ENCODE measurements at regions of chr9 and their contacts with region 1.

Region 1: DNA sequence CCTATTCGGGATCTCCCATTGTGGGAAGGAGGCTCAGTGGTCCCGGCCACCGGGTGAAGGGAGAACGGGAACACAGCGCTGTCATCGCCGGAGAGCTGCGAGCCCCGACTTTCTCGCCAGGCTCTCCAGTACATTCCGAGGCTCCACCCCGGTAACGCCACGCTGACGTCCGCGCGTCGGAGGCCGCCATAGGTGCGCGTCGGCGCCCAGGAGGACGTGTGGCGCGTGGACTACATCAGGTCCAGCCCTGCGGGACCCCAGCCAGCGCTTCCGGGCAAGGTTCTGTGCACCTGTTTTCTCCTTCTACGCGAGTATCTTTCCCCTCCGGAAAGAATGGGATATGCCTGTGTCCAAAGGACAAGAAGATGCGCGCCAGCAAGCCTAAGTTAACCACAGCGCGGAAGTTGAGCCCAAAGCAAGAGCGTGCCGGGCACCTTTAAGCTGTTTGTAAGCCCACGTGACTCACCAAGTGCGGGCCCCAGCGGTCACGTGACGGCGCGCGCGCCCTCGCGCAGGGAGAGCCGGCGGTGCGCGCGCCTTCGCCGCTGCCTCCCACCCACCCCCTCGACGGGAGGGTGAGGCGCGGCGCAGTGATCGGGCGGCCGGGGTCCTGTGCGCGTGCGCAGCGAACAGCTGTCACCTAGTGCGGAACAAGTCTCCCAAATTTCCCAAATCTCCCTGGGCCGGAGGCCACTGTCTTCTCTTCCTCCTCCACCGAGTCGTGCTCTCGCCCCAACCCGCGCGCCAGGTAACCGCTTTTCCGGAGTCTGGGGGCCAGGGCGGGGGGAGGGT is at the start of gene KDM4C:
- DNase-seq: peak; percentile 92 to 97 (median 94)
- ATAC-seq: peak; percentile 87
- H3K4me3 ChIP-seq: peak within 1 kb of the TSS; percentile 71
- H3K4me3 Mint-ChIP-seq: peak within 1 kb of the TSS; percentile 89 to 99 (median 96)
- H3K27ac ChIP-seq: peak within 1 kb of the TSS; percentile 98
- H3K27ac Mint-ChIP-seq: peak within 1 kb of the TSS; percentile 98 to 100 (median 100)
- H3K4me1 ChIP-seq: peaks cover 9 to 12% of the 10 kb centered on the region in 2 donors
- H3K4me1 Mint-ChIP-seq: peaks cover 12 to 41% (median 26%) of the 10 kb centered on the region in 7 donors
- H3K27me3 ChIP-seq: no peaks in the 10 kb centered on the region
- H3K27me3 Mint-ChIP-seq: no peaks in the 10 kb centered on the region
- total RNA-seq, gene KDM4C: 68.6 to 100 (median 93.3) TPM

Region 2: GRCh38 chr9:5437254-5438216 is 1320.1 kb before region 1 on chr9 and contains the start of gene PLGRKT:
- CTCF ChIA-PET with region 1: no interaction called
- POLR2A ChIA-PET with region 1: no interaction called
- intact Hi-C with region 1: loop called in 1 of 2 experiments (anchors 5 kb)
- DNase-seq: peak; percentile 77 to 91 (median 89)
- ATAC-seq: peak; percentile 96
- H3K4me3 ChIP-seq: peak within 1 kb of the TSS; percentile 84
- H3K4me3 Mint-ChIP-seq: peak within 1 kb of the TSS; percentile 86 to 98 (median 96)
- H3K27ac ChIP-seq: peak within 1 kb of the TSS; percentile 81
- H3K27ac Mint-ChIP-seq: peak within 1 kb of the TSS; percentile 90 to 100 (median 98)
- H3K4me1 ChIP-seq: peaks cover 18 to 19% of the 10 kb centered on the region in 2 donors
- H3K4me1 Mint-ChIP-seq: peaks cover 7 to 50% (median 36%) of the 10 kb centered on the region in 7 donors
- H3K27me3 ChIP-seq: no peaks in the 10 kb centered on the region
- H3K27me3 Mint-ChIP-seq: no peaks in the 10 kb centered on the region
- total RNA-seq, gene PLGRKT: 15.8 to 31.7 (median 16.8) TPM

Region 3: DNA sequence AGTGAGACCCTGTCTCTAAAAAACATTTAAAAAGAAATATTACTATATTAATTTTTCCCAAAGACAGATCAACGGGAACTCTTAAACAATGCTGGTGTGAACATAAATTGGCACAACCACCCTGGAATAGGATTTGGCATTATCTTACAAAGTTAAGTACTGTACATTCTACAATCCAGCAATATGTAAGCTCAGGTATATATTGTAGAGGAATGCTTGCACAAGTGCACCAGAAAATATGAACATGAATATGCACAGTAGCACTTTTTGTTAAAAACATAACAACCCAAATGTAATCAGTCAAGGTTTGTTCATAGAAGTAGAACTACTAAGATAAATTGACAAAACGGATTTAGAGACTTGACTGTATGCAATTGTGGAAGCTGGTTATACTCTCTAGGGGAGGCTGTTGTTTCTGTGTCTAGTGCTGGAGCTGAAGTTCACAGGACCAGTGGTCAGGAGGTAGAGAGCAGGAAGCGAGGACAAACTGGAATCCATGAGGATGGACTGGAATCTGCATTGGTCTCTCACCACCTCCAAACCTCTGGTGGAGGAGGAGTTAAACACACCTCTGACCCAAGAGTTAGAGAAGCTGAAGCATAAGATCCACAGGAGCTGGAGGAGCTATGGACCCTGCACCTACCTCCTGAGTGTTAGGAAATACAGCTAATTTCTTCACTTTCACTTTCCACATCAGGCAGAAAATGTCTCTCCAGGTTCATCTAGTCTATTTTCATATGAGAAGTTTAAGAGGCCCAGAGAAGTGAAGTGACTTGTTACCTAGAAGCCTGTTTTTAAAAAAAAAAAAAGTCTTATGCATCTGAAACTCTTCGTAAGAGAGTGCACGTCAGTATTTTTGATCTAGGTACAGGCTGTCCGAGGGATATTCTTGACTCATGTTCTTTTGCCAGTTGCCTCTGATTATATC is 1149.1 kb before region 1 on chr9:
- CTCF ChIA-PET with region 1: no interaction called
- POLR2A ChIA-PET with region 1: no interaction called
- intact Hi-C with region 1: no loop called
- DNase-seq: peak in 3 of 9 donors; percentile 8 to 23 (median 21)
- ATAC-seq: peak; percentile 55
- H3K4me3 ChIP-seq: peak overlapping the region; percentile 39
- H3K4me3 Mint-ChIP-seq: peak overlapping the region; percentile 69 to 88 (median 82)
- H3K27ac ChIP-seq: peak overlapping the region; percentile 47
- H3K27ac Mint-ChIP-seq: peak overlapping the region; percentile 53 to 93 (median 86)
- H3K4me1 ChIP-seq: peaks cover 0 to 6% of the 10 kb centered on the region in 2 donors
- H3K4me1 Mint-ChIP-seq: peaks cover 7 to 51% (median 42%) of the 10 kb centered on the region in 7 donors
- H3K27me3 ChIP-seq: no peaks in the 10 kb centered on the region
- H3K27me3 Mint-ChIP-seq: no peaks in the 10 kb centered on the region

Region 4: DNA sequence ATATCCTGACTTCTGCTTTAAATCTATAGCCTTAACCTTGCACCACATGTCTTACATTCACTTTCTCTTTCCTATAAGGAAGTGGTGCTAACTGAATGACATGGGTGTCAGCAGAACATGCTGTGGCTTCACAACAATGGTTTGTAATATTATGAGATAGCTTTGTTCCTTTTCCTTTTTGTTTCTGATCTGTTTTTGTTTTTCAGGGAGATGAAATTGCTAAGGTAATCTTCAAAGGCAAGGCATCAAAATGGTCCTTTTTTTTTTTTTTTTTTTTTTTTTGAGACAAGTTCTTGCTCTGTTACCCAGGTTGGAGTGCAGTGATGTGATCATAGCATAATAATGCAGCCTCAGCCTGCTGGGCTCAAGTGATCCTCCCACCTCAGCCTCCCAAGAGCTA is 688.7 kb before region 1 on chr9:
- CTCF ChIA-PET with region 1: no interaction called
- POLR2A ChIA-PET with region 1: no interaction called
- intact Hi-C with region 1: loop called in 1 of 2 experiments (anchors 1 kb)
- DNase-seq: peak in 7 of 9 donors; percentile 30 to 73 (median 63)
- ATAC-seq: peak; percentile 97
- H3K4me3 ChIP-seq: peak overlapping the region; percentile 16
- H3K4me3 Mint-ChIP-seq: peak overlapping the region; percentile 54 to 77 (median 72)
- H3K27ac ChIP-seq: peak overlapping the region; percentile 48
- H3K27ac Mint-ChIP-seq: peak overlapping the region; percentile 86 to 96 (median 93)
- H3K4me1 ChIP-seq: peaks cover 8 to 21% of the 10 kb centered on the region in 2 donors
- H3K4me1 Mint-ChIP-seq: peaks cover 17 to 28% (median 27%) of the 10 kb centered on the region in 7 donors
- H3K27me3 ChIP-seq: no peaks in the 10 kb centered on the region
- H3K27me3 Mint-ChIP-seq: no peaks in the 10 kb centered on the region

Region 5: GRCh38 chr9:6703898-6704639 is 53.6 kb before region 1 on chr9:
- CTCF ChIA-PET with region 1: no interaction called
- POLR2A ChIA-PET with region 1: interaction called, 60 read pairs
- intact Hi-C with region 1: loop called (anchors 1 kb)
- DNase-seq: peak; percentile 70 to 86 (median 77)
- ATAC-seq: peak; percentile 90
- H3K4me3 ChIP-seq: peak overlapping the region; percentile 98
- H3K4me3 Mint-ChIP-seq: peak overlapping the region; percentile 82 to 98 (median 95)
- H3K27ac ChIP-seq: peak overlapping the region; percentile 97
- H3K27ac Mint-ChIP-seq: peak overlapping the region; percentile 91 to 98 (median 93)
- H3K4me1 ChIP-seq: no peaks in the 10 kb centered on the region
- H3K4me1 Mint-ChIP-seq: peaks cover 3 to 15% (median 6%) of the 10 kb centered on the region in 7 donors
- H3K27me3 ChIP-seq: no peaks in the 10 kb centered on the region
- H3K27me3 Mint-ChIP-seq: peaks cover 0 to 3% (median 0%) of the 10 kb centered on the region in 5 donors

Region 6: DNA sequence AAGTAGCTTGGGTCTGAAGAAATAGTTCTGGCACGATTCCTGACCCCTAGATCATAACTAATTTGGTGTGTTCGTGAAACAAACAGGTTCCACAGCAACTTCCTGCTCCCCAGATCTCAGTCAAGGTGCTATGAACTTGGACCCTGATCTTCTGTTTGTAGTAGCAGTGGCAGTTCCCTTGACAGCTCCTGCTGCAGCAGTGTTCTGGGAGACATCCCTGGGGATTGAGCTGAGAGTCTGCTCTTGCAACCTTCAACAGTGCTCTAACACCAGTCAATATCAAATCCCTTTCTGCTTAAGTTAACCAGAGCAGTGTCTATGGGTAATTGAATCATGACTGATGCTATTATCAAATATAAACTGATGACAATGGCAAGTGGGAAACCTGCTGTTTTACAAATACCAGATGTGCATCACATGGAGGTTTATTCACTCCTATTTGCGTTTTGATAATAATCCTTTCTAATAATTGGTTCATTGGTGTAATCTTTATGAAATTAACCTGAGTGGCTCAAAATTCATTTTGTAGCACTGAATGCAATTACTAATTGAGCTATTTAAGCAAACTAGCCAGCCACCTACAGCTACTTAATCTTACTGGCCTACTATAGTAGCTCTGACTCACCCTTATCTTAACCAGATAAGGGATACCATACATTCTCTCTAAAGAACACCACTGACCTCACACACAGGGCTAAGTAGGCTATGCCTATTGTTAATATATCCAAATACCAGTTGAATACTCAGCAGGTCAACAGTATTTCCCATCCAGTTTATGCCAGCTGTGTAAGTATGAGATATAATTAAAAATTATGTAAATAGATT is 22.0 kb after region 1 on chr9:
- CTCF ChIA-PET with region 1: interaction called, 3 read pairs
- POLR2A ChIA-PET with region 1: interaction called, 16 read pairs
- intact Hi-C with region 1: no loop called
- DNase-seq: no peak
- ATAC-seq: no peak
- H3K4me3 ChIP-seq: no peak overlapping the region
- H3K4me3 Mint-ChIP-seq: peak overlapping the region in 7 of 10 donors; percentile 17 to 65 (median 43)
- H3K27ac ChIP-seq: no peak overlapping the region
- H3K27ac Mint-ChIP-seq: peak overlapping the region in 3 of 9 donors; percentile 53 to 87 (median 61)
- H3K4me1 ChIP-seq: peaks cover 23 to 58% of the 10 kb centered on the region in 2 donors
- H3K4me1 Mint-ChIP-seq: peaks cover 37 to 99% (median 75%) of the 10 kb centered on the region in 7 donors
- H3K27me3 ChIP-seq: no peaks in the 10 kb centered on the region
- H3K27me3 Mint-ChIP-seq: no peaks in the 10 kb centered on the region

Region 7: DNA sequence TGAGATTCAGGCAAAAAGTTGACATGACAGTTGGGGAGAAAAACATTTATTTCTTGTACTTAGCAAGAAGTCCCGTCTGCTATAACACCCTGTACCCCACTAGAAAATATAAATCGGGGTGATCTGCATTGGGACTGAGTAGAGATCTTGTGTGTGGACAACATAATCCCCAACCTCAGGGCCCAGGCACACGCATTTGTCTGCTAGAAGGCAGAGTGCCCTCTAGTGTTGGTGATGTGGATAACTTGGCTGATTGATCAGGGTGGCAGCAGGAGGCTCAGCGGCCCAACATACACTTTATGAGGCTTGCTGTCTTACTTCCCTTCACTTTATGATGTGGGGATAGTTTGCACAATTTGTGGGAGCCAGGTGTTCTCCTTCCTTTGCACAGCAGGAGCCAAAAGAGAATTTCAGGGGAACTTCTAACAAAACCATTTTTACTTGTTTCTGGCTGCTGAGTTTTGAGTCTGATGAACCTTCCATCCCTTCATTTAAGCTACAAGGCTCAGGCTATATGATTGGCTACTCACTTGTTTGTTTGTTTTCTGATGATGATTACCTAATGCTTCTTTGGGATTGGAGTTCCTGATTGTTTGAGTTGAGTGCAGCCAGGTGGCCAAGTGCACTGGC is 778.8 kb after region 1 on chr9:
- CTCF ChIA-PET with region 1: no interaction called
- POLR2A ChIA-PET with region 1: no interaction called
- intact Hi-C with region 1: loop called in 1 of 2 experiments (anchors 10 kb)
- DNase-seq: peak in 5 of 9 donors; percentile 3 to 38 (median 11)
- ATAC-seq: peak; percentile 53
- H3K4me3 ChIP-seq: no peak overlapping the region
- H3K4me3 Mint-ChIP-seq: no peak overlapping the region
- H3K27ac ChIP-seq: no peak overlapping the region
- H3K27ac Mint-ChIP-seq: peak overlapping the region in 1 of 9 donors; percentile 5
- H3K4me1 ChIP-seq: no peaks in the 10 kb centered on the region
- H3K4me1 Mint-ChIP-seq: peaks cover 0 to 36% (median 0%) of the 10 kb centered on the region in 7 donors
- H3K27me3 ChIP-seq: no peaks in the 10 kb centered on the region
- H3K27me3 Mint-ChIP-seq: peaks cover 7 to 27% (median 21%) of the 10 kb centered on the region in 5 donors

Region 8: DNA sequence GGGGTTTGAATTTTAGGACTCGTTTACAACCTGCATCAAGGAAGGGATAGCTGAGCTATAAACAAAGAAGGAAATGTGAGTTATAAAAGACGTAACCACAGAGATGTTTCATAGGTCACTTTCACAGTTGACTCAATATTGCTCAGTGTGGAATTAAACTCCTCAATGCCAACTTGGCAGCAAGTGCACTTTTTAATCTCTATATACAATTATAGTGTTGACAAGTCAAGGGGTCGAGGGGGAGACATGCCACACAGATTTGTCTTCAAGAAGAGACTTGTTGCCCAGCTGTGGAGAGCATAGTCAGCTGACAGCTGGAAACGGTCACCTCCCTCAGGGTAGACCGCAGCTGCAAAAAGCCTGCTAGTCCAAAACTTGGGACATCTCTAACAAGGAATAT is 1205.4 kb after region 1 on chr9:
- CTCF ChIA-PET with region 1: no interaction called
- POLR2A ChIA-PET with region 1: no interaction called
- intact Hi-C with region 1: no loop called
- DNase-seq: no peak
- ATAC-seq: no peak
- H3K4me3 ChIP-seq: no peak overlapping the region
- H3K4me3 Mint-ChIP-seq: no peak overlapping the region
- H3K27ac ChIP-seq: no peak overlapping the region
- H3K27ac Mint-ChIP-seq: no peak overlapping the region
- H3K4me1 ChIP-seq: peaks cover 0 to 15% of the 10 kb centered on the region in 2 donors
- H3K4me1 Mint-ChIP-seq: peaks cover 7 to 33% (median 25%) of the 10 kb centered on the region in 7 donors
- H3K27me3 ChIP-seq: no peaks in the 10 kb centered on the region
- H3K27me3 Mint-ChIP-seq: peaks cover 0 to 9% (median 0%) of the 10 kb centered on the region in 5 donors